Activated naive CD4-positive, alpha-beta T cell treated with anti-CD3 and anti-CD28 coated beads for 36 hours (primary cell): ENCODE measurements at regions of chr19 and their contacts with region 1.

Region 1: GRCh38 chr19:13986348-13986904 is 19.7 kb downstream of the RFX1 start:
- DNase-seq: peak; percentile 100
- H3K4me3 Mint-ChIP-seq: peak overlapping the region; percentile 65
- H3K27ac Mint-ChIP-seq: peak overlapping the region; percentile 98
- H3K4me1 Mint-ChIP-seq: peaks cover 64% of the 10 kb centered on the region
- H3K27me3 Mint-ChIP-seq: no peaks in the 10 kb centered on the region

Region 2: GRCh38 chr19:13747098-13747453 is 239.3 kb before region 1 on chr19:
- CTCF ChIA-PET with region 1: no interaction called
- intact Hi-C with region 1: loop called (anchors 1 kb)
- DNase-seq: no peak
- H3K4me3 Mint-ChIP-seq: peak overlapping the region; percentile 84
- H3K27ac Mint-ChIP-seq: no peak overlapping the region
- H3K4me1 Mint-ChIP-seq: peaks cover 35% of the 10 kb centered on the region
- H3K27me3 Mint-ChIP-seq: no peaks in the 10 kb centered on the region

Region 3: DNA sequence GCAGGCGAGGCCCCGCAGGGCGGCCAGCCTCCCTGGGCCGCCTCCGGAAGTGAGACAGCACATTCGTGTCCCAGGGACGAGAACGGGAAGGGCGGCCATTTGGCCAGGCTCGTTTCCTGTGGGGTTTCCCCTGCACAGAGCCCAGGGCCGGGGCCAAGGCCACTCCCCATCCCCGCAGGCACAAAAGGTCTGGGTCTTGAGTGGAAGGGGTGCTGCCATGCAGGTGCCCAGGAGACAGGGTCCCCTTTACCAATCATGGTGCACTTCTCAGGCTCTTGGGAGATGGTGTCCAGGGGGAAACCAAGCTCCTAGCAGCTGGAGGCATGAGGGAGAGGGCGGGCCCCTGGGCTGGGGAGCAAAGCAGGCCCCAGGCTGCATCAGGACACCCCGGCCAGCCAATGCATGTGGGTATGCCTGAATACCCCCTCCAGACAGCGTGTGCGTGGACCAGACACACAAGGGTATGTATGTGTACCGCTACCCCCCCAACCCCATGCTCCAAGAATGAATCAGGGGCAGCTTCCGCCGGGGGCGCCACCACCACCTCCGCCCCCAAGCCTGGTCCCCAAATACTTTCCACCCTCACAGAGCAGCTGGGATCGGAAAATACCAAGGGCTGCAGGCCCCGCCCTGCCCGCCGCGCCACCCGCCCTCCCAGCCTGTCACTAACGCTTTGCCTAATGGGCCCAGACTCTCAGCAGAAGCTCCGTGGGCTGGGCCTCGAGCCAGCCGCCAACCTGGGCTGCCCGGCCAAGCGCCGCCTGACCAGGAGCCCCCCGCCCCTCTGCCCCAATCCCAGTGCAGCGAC is 147.1 kb before region 1 on chr19:
- CTCF ChIA-PET with region 1: no interaction called
- intact Hi-C with region 1: loop called (anchors 1 kb)
- DNase-seq: peak; percentile 95
- H3K4me3 Mint-ChIP-seq: peak overlapping the region; percentile 93
- H3K27ac Mint-ChIP-seq: peak overlapping the region; percentile 99
- H3K4me1 Mint-ChIP-seq: peaks cover 47% of the 10 kb centered on the region
- H3K27me3 Mint-ChIP-seq: no peaks in the 10 kb centered on the region

Region 4: GRCh38 chr19:14031719-14032480 is 45.5 kb after region 1 on chr19 and contains the start of gene IL27RA:
- CTCF ChIA-PET with region 1: interaction called, 9 read pairs
- intact Hi-C with region 1: loop called (anchors 1 kb)
- DNase-seq: peak; percentile 84
- H3K4me3 Mint-ChIP-seq: peak within 1 kb of the TSS; percentile 88
- H3K27ac Mint-ChIP-seq: peak within 1 kb of the TSS; percentile 92
- H3K4me1 Mint-ChIP-seq: peaks cover 26% of the 10 kb centered on the region
- H3K27me3 Mint-ChIP-seq: no peaks in the 10 kb centered on the region
- total RNA-seq, gene IL27RA: 59.3 to 59.4 TPM